ENCODE measurements at regions of chr3 and their contacts with region 1.

Region 1: DNA sequence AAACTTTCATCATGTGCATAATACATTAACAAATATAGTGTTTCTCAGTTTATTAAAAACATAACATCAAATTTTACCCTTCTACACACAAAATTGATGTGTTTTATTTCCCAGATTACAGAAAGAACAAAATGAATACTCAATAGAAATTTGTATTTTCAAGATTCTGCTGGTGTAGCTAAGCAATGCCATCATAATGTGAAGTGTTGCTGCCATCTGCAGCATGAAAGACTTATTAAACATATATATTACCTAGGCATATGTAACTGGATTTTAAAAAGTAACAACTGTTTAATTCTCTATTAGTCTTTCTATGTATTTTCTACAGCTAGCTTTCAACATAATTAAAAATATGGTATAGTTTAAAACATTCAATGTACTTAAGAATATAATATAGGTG is 27.5 kb downstream of the PLSCR5 start:
- DNase-seq: peak; percentile 76
- ATAC-seq: peak; percentile 87
- H3K4me3 ChIP-seq: no peak overlapping the region
- H3K27ac ChIP-seq: no peak overlapping the region
- H3K4me1 ChIP-seq: no peaks in the 10 kb centered on the region
- H3K27me3 ChIP-seq: no peaks in the 10 kb centered on the region
- CTCF ChIP-seq: peak; percentile 79

Region 2: DNA sequence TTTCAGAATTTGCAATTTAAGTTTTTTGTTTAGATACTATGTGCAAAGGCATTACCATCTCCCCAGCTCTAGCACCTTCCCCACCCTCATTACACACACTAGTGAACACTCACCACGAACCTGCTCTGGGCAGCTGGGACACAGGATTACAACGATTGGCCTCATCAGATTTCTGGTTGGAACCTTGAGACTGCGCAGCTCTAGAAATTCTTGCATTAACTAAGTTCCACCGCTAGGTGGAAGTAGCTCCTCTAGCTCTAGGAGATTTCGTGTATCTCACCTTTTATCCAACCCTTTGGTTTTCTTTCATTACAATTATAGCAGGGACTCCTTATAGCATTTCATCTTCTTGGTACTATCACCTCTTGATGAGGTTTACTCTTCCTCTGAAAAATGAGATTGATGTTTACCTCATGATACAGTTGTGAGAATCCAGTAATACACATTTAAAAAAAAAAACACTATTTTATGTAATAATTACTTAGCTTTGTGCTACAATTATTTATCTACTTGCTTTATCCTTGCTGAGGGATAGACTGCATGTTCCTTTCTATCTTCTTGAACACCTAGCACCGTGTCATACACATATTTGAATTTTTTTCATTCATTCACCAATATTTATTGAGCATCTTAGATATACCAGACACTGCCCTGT is 388.0 kb before region 1 on chr3:
- CTCF ChIA-PET with region 1: interaction called, 13 read pairs
- POLR2A ChIA-PET with region 1: interaction called, 5 read pairs
- intact Hi-C with region 1: loop called (anchors 1 kb)
- DNase-seq: peak; percentile 90
- ATAC-seq: peak; percentile 79
- H3K4me3 ChIP-seq: peak overlapping the region; percentile 36; the same call in 1 of the 2 replicates
- H3K27ac ChIP-seq: no peak overlapping the region
- H3K4me1 ChIP-seq: peaks cover 20% of the 10 kb centered on the region
- H3K27me3 ChIP-seq: no peaks in the 10 kb centered on the region
- CTCF ChIP-seq: peak; percentile 90

Region 3: GRCh38 chr3:146326670-146327543 is 250.8 kb before region 1 on chr3:
- CTCF ChIA-PET with region 1: interaction called, 21 read pairs
- POLR2A ChIA-PET with region 1: no interaction called
- intact Hi-C with region 1: loop called (anchors 1 kb)
- DNase-seq: peak; percentile 84
- ATAC-seq: peak; percentile 96
- H3K4me3 ChIP-seq: no peak overlapping the region
- H3K27ac ChIP-seq: no peak overlapping the region
- H3K4me1 ChIP-seq: no peaks in the 10 kb centered on the region
- H3K27me3 ChIP-seq: no peaks in the 10 kb centered on the region
- CTCF ChIP-seq: peak; percentile 91

Region 4: GRCh38 chr3:146375219-146375618 is 202.4 kb before region 1 on chr3:
- CTCF ChIA-PET with region 1: interaction called, 12 read pairs
- POLR2A ChIA-PET with region 1: no interaction called
- intact Hi-C with region 1: loop called (anchors 5 kb)
- DNase-seq: no peak
- ATAC-seq: no peak
- H3K4me3 ChIP-seq: no peak overlapping the region
- H3K27ac ChIP-seq: no peak overlapping the region
- H3K4me1 ChIP-seq: peaks cover 3% of the 10 kb centered on the region; the same call in 1 of the 2 replicates
- H3K27me3 ChIP-seq: no peaks in the 10 kb centered on the region
- CTCF ChIP-seq: no peak

Region 5: DNA sequence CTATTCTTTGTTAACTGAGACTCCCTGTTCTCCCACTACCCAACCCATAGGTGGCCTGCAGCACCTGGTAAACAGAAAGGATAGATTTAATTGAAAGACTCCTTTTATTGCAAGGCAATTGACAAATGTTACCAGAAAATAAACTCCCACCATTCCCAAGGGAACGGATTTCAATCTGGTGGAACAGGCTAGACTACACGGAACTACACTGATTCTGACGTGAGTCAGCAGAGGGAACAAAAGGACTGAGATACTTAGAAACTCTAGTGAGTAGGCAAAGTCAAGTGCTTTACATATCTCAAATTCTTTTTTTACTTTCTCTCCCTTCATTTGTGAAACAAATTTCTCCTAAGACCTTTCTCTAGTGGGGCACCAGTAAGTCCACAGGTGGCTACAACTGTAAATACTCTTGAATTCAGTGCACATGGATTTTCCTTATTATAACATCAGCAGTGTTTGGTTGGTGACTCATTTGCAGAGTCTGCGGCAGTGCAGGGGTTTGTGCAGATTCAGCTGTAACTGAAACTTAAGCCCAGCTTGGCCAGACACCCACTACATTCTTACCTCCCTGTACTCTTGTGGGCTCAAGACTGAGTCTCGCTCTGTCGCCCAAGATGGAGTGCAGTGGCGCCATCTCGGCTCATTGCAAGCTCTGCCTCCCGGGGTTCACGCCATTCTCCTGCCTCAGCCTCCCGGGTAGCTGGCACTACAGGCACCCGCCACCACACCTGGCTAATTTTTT is 74.0 kb before region 1 on chr3:
- CTCF ChIA-PET with region 1: no interaction called
- POLR2A ChIA-PET with region 1: no interaction called
- intact Hi-C with region 1: loop called (anchors 2 kb)
- DNase-seq: peak; percentile 96
- ATAC-seq: peak; percentile 78
- H3K4me3 ChIP-seq: peak overlapping the region; percentile 46; the same call in 1 of the 2 replicates
- H3K27ac ChIP-seq: peak overlapping the region; percentile 97
- H3K4me1 ChIP-seq: peaks cover 56% of the 10 kb centered on the region
- H3K27me3 ChIP-seq: no peaks in the 10 kb centered on the region
- CTCF ChIP-seq: peak; percentile 52